HCT116 (cell line): ENCODE measurements at regions of chr11 and their contacts with region 1.

Region 1: DNA sequence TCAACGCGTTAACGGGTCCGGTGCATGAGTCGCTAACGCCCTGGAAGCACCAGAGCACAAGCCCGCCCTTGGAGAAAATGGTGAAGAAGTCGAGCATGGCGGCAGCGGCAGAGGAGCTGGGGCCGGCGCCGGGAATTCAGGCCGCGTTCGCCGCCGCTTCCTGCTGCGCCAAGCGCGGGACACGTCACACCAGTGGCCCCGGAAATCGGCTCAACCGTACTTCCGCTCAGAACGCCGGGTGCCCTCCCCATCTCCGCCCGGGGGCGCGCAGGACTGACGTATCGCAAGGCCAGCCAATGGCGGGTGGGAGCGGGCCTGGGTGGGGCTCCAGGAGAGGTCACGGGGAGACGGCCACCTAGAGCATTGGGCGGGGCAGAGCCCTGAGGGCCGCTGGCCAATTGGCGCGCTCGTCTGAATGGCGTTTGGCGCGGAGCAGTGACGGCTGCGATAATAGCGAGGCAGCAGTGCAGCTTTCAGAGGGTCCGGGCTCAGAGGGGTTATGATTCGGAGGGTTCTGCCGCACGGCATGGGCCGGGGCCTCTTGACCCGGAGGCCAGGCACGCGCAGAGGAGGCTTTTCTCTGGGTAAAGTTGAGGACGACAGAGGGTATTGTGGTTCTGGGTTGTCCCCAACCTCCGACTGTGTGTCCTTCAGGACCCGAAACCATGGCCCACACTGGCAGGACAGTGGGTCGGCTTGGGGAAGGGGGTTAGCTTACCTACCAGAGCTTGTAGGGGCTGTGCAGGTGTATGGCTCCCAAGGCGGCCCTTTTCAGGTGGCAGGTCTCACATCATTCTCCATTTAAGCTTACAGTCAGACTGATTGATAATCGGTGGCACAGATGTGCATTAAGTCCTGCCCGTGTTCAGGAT is at the starts of genes FOXRED1 and SRPRA:
- DNase-seq: peak; percentile 97
- ATAC-seq: peak; percentile 96
- H3K4me3 ChIP-seq: peak within 1 kb of the TSS; percentile 95 to 99
- H3K27ac ChIP-seq: peak within 1 kb of the TSS; percentile 69
- H3K4me1 ChIP-seq: peaks cover 3 to 20% of the 10 kb centered on the region in 2 experiments; a peak in 2 of 4 replicates
- H3K27me3 ChIP-seq: no peaks in the 10 kb centered on the region
- CTCF ChIP-seq: no peak
- POLR2A ChIP-seq: peak; percentile 57
- RAD21 ChIP-seq: no peak
- total RNA-seq, gene FOXRED1: 41.3 TPM
- total RNA-seq, gene SRPRA: 74.5 TPM

Region 2: DNA sequence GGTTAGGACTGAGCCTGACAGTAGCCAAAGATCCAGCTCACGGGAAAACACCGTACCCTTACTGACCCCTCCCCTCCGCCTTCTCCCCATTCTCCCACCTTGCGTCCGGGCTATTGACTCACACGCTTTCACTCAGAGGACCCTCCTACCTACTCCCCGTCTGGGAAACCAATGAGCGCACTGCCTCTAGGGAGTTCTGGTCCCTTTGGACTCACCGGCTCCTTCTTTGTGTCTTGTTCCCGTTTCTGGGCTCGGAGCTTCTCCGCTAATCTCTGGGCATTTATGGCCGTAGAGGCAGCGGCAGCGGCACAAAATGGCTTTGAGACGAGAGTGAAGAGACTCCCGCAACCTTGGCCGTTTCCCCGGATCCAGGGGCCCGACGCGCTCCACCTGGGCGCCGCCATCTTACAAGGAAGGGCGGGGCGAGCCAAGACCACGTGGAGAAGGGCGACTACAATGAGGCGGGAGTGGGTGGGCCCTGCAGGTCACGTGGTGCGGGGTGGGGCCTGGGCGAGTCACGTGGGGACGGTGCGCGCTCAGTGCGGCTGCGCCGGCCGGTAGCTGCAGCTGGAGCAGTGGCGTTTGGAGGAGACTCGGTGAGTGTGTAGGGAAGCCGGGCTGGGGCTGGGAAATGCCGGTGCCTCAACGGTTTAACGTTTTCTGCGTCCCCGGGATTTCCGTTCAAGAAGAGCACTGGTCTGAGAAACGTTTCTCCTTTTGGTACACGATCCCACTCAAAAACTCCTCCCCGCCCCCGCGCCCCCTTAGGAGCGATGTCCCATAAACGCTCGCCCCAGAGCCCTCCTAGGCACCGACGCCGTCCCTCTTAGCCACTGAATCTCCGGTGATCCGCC is 57.5 kb before region 1 on chr11 and contains the starts of genes FAM118B and RPUSD4:
- CTCF ChIA-PET with region 1: no interaction called
- POLR2A ChIA-PET with region 1: no interaction called
- RAD21 ChIA-PET with region 1: no interaction called
- intact Hi-C with region 1: loop called (anchors 2 kb)
- DNase-seq: peak; percentile 87
- ATAC-seq: peak; percentile 90
- H3K4me3 ChIP-seq: peak within 1 kb of the TSS; percentile 73 to 99
- H3K27ac ChIP-seq: peak within 1 kb of the TSS; percentile 52
- H3K4me1 ChIP-seq: peaks cover 4 to 14% of the 10 kb centered on the region in 2 experiments; a peak in 3 of 4 replicates
- H3K27me3 ChIP-seq: no peaks in the 10 kb centered on the region
- CTCF ChIP-seq: no peak
- POLR2A ChIP-seq: peak; percentile 75
- RAD21 ChIP-seq: no peak
- total RNA-seq, gene FAM118B: 12.8 TPM
- total RNA-seq, gene RPUSD4: 40.1 TPM